K562 (cell line): ENCODE measurements at regions of chr5 and their contacts with region 1.

Region 1: DNA sequence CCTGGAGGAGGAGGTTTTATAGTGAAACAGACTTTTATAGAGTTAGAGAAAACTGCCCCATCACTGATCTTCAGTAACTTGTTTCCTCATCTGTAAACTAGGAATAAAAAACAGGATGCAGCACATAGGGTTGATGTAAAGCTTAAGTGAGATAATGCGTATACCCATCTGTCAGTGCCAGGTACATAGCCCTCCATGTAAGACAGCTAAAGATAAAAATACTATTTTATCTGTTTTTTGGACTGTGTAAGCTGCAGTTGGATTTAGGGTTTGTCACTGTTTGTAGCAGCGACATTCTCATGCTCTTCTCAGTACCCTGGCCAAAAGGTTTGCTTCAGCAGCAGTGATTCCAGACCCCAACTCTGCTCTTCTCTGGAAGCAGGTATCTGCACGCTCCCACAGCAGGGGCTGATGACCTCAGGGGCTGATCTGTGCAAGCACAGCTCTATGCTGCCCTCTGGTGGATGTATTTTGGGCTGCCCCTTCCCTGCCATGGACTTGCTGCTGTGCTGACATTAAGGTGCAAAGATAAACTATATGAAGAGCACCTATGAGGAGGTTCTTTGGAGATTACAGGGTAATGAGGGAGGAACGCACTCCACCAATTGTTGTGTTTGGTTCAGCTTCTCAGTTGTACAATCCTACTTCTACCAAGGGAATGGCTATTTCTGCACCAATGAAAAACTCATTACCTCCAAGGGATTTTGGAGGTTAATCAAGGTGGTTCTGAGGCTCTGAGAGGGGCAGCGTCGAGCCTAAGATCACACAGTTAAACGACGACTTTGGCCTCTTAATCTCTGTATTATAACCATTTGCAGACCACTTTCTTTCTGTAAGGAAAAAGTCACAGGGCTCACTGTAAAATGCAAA is 13.1 kb downstream of the HMHB1 start:
- DNase-seq: peak; percentile 78 to 85 (median 82)
- ATAC-seq: peak; percentile 100
- H3K4me3 ChIP-seq: no peak overlapping the region
- H3K27ac ChIP-seq: no peak overlapping the region
- H3K4me1 ChIP-seq: peaks cover 0 to 7% of the 10 kb centered on the region in 2 experiments; a peak in 2 of 5 replicates
- H3K27me3 ChIP-seq: no peaks in the 10 kb centered on the region
- CTCF ChIP-seq: peak; percentile 80 to 88 (median 86)
- EP300 ChIP-seq: no peak
- POLR2A ChIP-seq: no peak
- RAD21 ChIP-seq: peak; percentile 90 to 97

Region 2: DNA sequence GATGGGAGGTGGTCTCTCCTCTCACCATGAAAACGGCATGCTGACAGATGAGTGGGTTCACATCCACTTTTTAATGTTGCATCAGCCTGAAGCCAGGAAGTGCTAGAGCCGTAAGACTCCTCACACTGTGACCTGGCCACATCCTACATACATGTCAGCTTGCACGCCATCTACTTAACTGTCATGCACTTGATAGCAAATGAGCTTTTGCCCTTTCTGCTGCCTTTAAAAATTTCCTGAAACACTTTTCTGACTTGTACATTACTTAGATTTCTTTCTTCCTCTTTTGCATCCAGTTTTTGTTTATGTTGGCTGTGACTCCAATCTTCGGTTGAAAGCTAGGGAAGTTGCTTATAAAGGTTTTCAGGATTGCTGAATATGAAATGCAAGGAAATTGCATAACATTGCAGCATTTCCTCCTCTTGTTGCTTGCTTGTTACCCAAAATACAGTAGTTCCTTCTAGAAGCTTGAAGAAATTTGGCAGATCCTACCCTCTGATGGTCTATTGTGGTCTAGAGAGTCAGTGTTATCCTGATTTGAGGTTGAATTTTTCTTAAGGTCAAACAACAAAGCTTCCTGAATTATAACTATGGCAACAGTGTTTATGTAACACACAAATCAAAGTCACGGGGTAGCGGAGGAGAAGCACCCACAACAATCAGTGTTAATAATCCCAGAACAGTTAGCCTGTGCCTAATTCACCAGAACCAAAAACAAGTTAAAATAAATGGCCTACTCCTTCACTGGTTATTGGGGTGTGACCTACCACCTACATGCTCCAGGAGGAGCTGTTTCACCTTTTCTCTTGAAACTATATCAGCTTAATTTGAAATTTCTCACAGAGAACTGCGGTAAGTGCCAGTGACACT is 822.4 kb before region 1 on chr5:
- CTCF ChIA-PET with region 1: interaction called, 13 read pairs
- POLR2A ChIA-PET with region 1: no interaction called
- in situ Hi-C with region 1: loop called (anchors 10 kb)
- intact Hi-C with region 1: loop called (anchors 2 kb)
- DNase-seq: peak; percentile 23 to 45 (median 36)
- ATAC-seq: peak; percentile 88
- H3K4me3 ChIP-seq: no peak overlapping the region
- H3K27ac ChIP-seq: no peak overlapping the region
- H3K4me1 ChIP-seq: no peaks in the 10 kb centered on the region
- H3K27me3 ChIP-seq: peaks cover 2 to 4% of the 10 kb centered on the region in 2 experiments; a peak in 1 of 5 replicates
- CTCF ChIP-seq: peak; percentile 49 to 74 (median 68); a peak in 4 of 6 replicates
- EP300 ChIP-seq: no peak; the same call in 1 of the 2 replicates
- POLR2A ChIP-seq: no peak
- RAD21 ChIP-seq: peak; percentile 75 to 83

Region 3: DNA sequence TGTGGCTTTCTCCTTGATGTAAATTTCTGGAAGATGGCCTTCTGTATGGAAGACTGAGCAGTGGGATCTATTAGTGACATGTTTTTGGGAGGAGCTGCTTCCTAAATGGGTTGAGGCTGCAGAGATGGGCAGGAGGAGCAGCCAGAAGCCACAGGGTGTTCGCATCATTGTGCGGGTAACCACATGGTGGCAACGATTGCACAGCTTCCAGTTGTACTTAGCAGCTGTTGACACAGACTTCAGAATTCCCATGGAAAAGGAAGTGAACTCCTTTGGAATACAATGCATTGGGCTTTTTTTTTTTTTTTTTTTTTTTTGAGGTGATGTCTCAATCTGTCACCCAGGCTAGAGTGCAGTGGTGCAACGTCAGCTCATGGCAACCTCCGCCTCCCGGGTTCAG is 718.9 kb before region 1 on chr5:
- CTCF ChIA-PET with region 1: no interaction called
- POLR2A ChIA-PET with region 1: no interaction called
- in situ Hi-C with region 1: no loop called
- intact Hi-C with region 1: loop called (anchors 5 kb)
- DNase-seq: peak in 1 of 4 experiments; percentile 18
- ATAC-seq: peak; percentile 50; the same call in 1 of the 3 replicates
- H3K4me3 ChIP-seq: no peak overlapping the region
- H3K27ac ChIP-seq: no peak overlapping the region
- H3K4me1 ChIP-seq: peaks cover 0 to 8% of the 10 kb centered on the region in 2 experiments; a peak in 2 of 5 replicates
- H3K27me3 ChIP-seq: no peaks in the 10 kb centered on the region
- CTCF ChIP-seq: peak in 2 of 3 experiments; percentile 12 to 22; a peak in 1 of 6 replicates
- EP300 ChIP-seq: no peak
- POLR2A ChIP-seq: no peak
- RAD21 ChIP-seq: peak in 1 of 2 experiments; percentile 40; a peak in 2 of 4 replicates

Region 4: GRCh38 chr5:143403593-143404415 is 421.3 kb before region 1 on chr5 and contains the start of gene NR3C1:
- CTCF ChIA-PET with region 1: interaction called, 4 read pairs
- POLR2A ChIA-PET with region 1: no interaction called
- in situ Hi-C with region 1: no loop called
- intact Hi-C with region 1: loop called (anchors 1 kb)
- DNase-seq: peak; percentile 79 to 89 (median 82)
- ATAC-seq: peak; percentile 76
- H3K4me3 ChIP-seq: peak within 1 kb of the TSS; percentile 76
- H3K27ac ChIP-seq: peak within 1 kb of the TSS; percentile 97
- H3K4me1 ChIP-seq: peaks cover 18 to 19% of the 10 kb centered on the region in 2 experiments; a peak in 4 of 5 replicates
- H3K27me3 ChIP-seq: no peaks in the 10 kb centered on the region
- CTCF ChIP-seq: peak; percentile 32 to 82 (median 66)
- EP300 ChIP-seq: no peak
- POLR2A ChIP-seq: peak; percentile 40; the same call in 1 of the 2 replicates
- RAD21 ChIP-seq: peak; percentile 48 to 54
- polyA plus RNA-seq, gene NR3C1: 8.2 to 10.1 TPM

Region 5: GRCh38 chr5:143733665-143734455 is 91.2 kb before region 1 on chr5:
- CTCF ChIA-PET with region 1: no interaction called
- POLR2A ChIA-PET with region 1: no interaction called
- in situ Hi-C with region 1: no loop called
- intact Hi-C with region 1: no loop called
- DNase-seq: no peak
- ATAC-seq: no peak
- H3K4me3 ChIP-seq: no peak overlapping the region
- H3K27ac ChIP-seq: no peak overlapping the region
- H3K4me1 ChIP-seq: no peaks in the 10 kb centered on the region
- H3K27me3 ChIP-seq: peaks cover 0 to 4% of the 10 kb centered on the region in 2 experiments; a peak in 1 of 5 replicates
- CTCF ChIP-seq: no peak
- EP300 ChIP-seq: no peak
- POLR2A ChIP-seq: no peak
- RAD21 ChIP-seq: no peak

Region 6: GRCh38 chr5:144004146-144004545 is 179.1 kb after region 1 on chr5:
- CTCF ChIA-PET with region 1: no interaction called
- POLR2A ChIA-PET with region 1: no interaction called
- in situ Hi-C with region 1: no loop called
- intact Hi-C with region 1: no loop called
- DNase-seq: no peak
- ATAC-seq: no peak
- H3K4me3 ChIP-seq: no peak overlapping the region
- H3K27ac ChIP-seq: no peak overlapping the region
- H3K4me1 ChIP-seq: no peaks in the 10 kb centered on the region
- H3K27me3 ChIP-seq: no peaks in the 10 kb centered on the region
- CTCF ChIP-seq: no peak
- EP300 ChIP-seq: no peak
- POLR2A ChIP-seq: no peak
- RAD21 ChIP-seq: no peak

Region 7: DNA sequence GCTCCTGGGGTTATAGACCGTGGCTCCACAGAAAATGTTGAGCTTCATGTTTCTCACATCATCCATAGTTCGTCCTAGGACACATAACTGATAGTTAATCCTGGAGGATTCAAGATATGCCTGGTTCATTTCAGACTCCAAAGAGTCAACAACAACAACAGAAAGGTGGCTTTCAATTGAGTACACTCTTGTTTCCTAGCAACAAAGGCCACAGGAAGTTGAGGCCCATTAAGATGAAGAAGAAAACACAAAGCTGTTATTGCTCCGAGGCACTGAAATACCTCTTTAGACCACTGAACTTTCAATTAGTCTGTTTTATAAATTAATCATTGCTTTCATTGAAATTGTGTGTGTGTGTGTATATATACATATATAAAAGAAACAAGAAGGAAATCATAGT is 190.9 kb after region 1 on chr5:
- CTCF ChIA-PET with region 1: no interaction called
- POLR2A ChIA-PET with region 1: no interaction called
- in situ Hi-C with region 1: no loop called
- intact Hi-C with region 1: no loop called
- DNase-seq: no peak
- ATAC-seq: no peak
- H3K4me3 ChIP-seq: no peak overlapping the region
- H3K27ac ChIP-seq: no peak overlapping the region
- H3K4me1 ChIP-seq: no peaks in the 10 kb centered on the region
- H3K27me3 ChIP-seq: no peaks in the 10 kb centered on the region
- CTCF ChIP-seq: no peak
- EP300 ChIP-seq: no peak
- POLR2A ChIP-seq: no peak
- RAD21 ChIP-seq: no peak